Activated naive CD4-positive, alpha-beta T cell treated with anti-CD3 and anti-CD28 coated beads, Interleukin-2, amount 10 ng/mL, durations not matched to agents 7 days and 5 days (primary cell): ENCODE measurements at regions of chr3 and their contacts with region 1.

Region 1: GRCh38 chr3:18758047-18758704 is 333.0 kb upstream of the SATB1 start:
- DNase-seq: peak; percentile 26
- H3K4me3 Mint-ChIP-seq: no peak overlapping the region
- H3K27ac Mint-ChIP-seq: peak overlapping the region; percentile 6
- H3K4me1 Mint-ChIP-seq: peaks cover 38% of the 10 kb centered on the region
- H3K27me3 Mint-ChIP-seq: no peaks in the 10 kb centered on the region

Region 2: DNA sequence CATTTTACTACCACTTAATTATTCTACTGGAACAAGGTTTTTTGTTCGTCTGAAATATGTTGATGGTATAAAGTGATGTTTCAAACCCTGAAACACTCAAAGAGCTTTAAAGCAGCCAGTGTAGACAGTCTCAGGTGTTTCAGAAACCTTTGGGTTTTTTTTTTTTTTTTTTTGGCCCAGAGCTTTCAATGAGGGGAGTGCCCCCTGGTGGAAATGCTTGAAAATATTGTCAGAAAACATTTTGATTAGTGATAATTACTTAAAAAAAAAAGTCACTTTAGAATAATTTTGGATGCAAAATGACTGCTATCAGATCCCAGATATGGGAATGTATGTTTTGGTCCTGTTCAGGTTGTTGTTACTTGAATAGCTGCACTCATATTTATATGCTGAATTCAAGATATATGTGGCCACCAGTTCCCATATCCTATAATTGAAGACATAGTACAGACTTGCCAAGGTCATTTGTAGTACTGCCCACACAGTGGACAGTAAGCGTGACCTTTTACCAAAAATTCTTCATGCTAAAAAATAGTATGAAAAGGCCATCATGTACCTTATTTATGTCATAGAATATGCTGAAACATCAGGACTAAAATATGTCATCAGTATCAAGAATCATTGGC is 369.0 kb before region 1 on chr3:
- CTCF ChIA-PET with region 1: interaction called, 16 read pairs
- DNase-seq: no peak
- H3K4me3 Mint-ChIP-seq: no peak overlapping the region
- H3K27ac Mint-ChIP-seq: peak overlapping the region; percentile 11
- H3K4me1 Mint-ChIP-seq: peaks cover 83% of the 10 kb centered on the region
- H3K27me3 Mint-ChIP-seq: no peaks in the 10 kb centered on the region

Region 3: GRCh38 chr3:18717598-18717997 is 40.6 kb before region 1 on chr3:
- CTCF ChIA-PET with region 1: interaction called, 17 read pairs
- DNase-seq: no peak
- H3K4me3 Mint-ChIP-seq: peak overlapping the region; percentile 21
- H3K27ac Mint-ChIP-seq: peak overlapping the region; percentile 96
- H3K4me1 Mint-ChIP-seq: peaks cover 69% of the 10 kb centered on the region
- H3K27me3 Mint-ChIP-seq: no peaks in the 10 kb centered on the region

Region 4: DNA sequence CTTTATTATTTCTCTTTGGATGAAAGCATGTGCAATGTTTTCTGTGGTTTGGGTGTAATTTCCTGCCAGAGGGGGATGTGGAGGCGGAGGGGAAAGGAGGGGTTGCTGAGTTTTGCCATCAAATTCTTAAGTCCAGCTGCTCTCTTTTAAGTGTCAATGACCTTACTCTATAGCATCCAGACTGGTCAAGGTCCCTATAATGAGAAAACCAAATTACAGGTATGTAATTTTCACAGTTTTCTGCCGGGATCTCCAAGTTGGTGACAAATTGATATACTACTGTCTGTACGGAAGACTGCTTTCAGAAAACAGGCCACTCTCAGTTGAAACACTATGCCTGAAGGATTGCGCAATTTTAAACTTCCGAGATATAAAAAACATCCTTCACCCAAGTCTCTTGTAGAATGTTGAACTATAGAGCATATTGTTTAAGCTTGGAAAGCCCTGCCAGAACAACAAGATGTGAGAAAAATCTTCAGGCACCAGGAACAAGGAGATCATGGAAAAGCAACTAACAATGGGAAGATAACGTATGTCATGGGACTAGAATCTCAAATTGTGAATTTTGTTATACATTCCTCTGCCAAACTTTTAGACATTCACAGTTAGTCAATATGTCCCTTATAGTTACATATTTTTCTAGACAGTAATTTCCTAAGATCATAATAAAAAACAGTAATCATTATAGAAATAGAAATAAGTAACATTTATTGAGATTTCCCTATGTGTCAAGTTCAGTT is 32.3 kb before region 1 on chr3:
- CTCF ChIA-PET with region 1: interaction called, 12 read pairs
- DNase-seq: peak; percentile 50
- H3K4me3 Mint-ChIP-seq: peak overlapping the region; percentile 69
- H3K27ac Mint-ChIP-seq: peak overlapping the region; percentile 88
- H3K4me1 Mint-ChIP-seq: peaks cover 78% of the 10 kb centered on the region
- H3K27me3 Mint-ChIP-seq: no peaks in the 10 kb centered on the region